SK-N-SH (cell line): ENCODE measurements at regions of chr7 and their contacts with region 1.

Region 1: GRCh38 chr7:70040970-70041766 is 442.9 kb downstream of the AUTS2 start:
- DNase-seq: no peak
- H3K4me3 ChIP-seq: no peak overlapping the region
- H3K27ac ChIP-seq: peak overlapping the region in 1 of 2 experiments; percentile 62; a peak in 1 of 4 replicates
- H3K4me1 ChIP-seq: peaks cover 28 to 55% of the 10 kb centered on the region in 2 experiments
- H3K27me3 ChIP-seq: no peaks in the 10 kb centered on the region
- CTCF ChIP-seq: peak; percentile 78
- EP300 ChIP-seq: no peak
- RAD21 ChIP-seq: peak; percentile 88

Region 2: DNA sequence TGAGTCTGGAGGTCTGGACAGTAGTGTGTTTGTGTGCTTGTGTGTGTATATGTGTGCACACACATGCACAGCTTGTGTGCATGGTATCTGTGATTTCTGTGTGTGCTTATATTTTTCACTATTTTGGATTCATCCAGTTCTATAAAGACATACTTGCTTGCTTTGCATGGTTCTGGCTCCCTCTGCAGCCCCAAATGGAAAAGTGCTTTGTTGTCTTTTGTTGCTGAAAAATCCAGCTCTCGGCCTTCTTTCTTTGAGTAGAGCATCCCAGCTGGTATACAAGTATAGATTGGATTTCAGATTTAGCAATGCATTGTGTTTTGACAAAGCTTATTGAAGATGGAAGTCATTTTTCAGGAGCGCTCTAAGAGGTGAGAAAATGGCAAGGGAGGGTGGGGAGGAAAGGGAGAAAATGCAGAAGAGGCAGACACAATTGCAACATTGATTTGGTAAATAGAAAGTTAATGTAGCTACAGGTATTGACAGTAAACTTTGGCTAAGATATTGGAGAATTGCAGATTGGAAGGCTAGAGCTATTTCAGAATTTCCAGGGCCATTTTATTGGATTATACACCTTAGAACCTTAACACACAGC is 109.0 kb before region 1 on chr7:
- CTCF ChIA-PET with region 1: interaction called, 33 read pairs
- POLR2A ChIA-PET with region 1: no interaction called
- DNase-seq: peak; percentile 61
- H3K4me3 ChIP-seq: no peak overlapping the region
- H3K27ac ChIP-seq: no peak overlapping the region
- H3K4me1 ChIP-seq: peaks cover 0 to 20% of the 10 kb centered on the region in 2 experiments; a peak in 2 of 4 replicates
- H3K27me3 ChIP-seq: no peaks in the 10 kb centered on the region
- CTCF ChIP-seq: peak; percentile 97
- EP300 ChIP-seq: no peak
- RAD21 ChIP-seq: peak; percentile 100

Region 3: GRCh38 chr7:70016044-70016770 is 25.0 kb before region 1 on chr7:
- CTCF ChIA-PET with region 1: interaction called, 27 read pairs
- POLR2A ChIA-PET with region 1: no interaction called
- DNase-seq: no peak
- H3K4me3 ChIP-seq: 0 out of 4 replicates have a peak overlapping the region, but pooled peaks of 1 of the 2 experiments have one; percentile 8
- H3K27ac ChIP-seq: peak overlapping the region in 1 of 2 experiments; percentile 25; a peak in 1 of 4 replicates
- H3K4me1 ChIP-seq: peaks cover 11 to 17% of the 10 kb centered on the region in 2 experiments; a peak in 3 of 4 replicates
- H3K27me3 ChIP-seq: no peaks in the 10 kb centered on the region
- CTCF ChIP-seq: no peak
- EP300 ChIP-seq: 0 out of 4 replicates have a peak, but pooled peaks of 1 of the 2 experiments have one; percentile 43
- RAD21 ChIP-seq: no peak

Region 4: GRCh38 chr7:70060298-70061068 is 19.3 kb after region 1 on chr7:
- CTCF ChIA-PET with region 1: interaction called, 16 read pairs
- POLR2A ChIA-PET with region 1: no interaction called
- DNase-seq: no peak
- H3K4me3 ChIP-seq: no peak overlapping the region
- H3K27ac ChIP-seq: peak overlapping the region in 1 of 2 experiments; percentile 43; a peak in 1 of 4 replicates
- H3K4me1 ChIP-seq: peaks cover 0 to 14% of the 10 kb centered on the region in 2 experiments; a peak in 2 of 4 replicates
- H3K27me3 ChIP-seq: no peaks in the 10 kb centered on the region
- CTCF ChIP-seq: no peak
- EP300 ChIP-seq: no peak
- RAD21 ChIP-seq: no peak

Region 5: DNA sequence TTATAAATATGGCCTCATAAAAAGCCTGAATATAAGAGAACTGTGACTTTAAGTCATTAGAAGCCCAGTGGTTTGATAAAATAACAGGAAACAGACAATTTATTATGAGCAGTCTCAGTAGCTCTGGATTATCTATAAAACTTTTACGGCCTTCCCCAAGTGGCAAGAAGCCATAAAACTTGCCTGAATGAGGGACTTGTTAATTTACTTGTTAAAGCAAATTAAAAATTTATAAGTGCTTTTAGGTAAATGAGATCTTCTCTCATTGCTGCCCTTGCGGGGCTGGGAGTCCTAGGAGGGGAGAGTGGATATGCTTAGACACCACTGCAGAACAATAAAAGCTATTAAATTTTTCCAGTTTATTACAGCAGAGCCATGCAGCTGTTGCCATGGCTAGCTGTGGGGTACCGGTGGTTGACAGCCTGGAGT is 57.0 kb after region 1 on chr7:
- CTCF ChIA-PET with region 1: no interaction called
- POLR2A ChIA-PET with region 1: no interaction called
- DNase-seq: no peak
- H3K4me3 ChIP-seq: no peak overlapping the region
- H3K27ac ChIP-seq: no peak overlapping the region
- H3K4me1 ChIP-seq: peaks cover 23 to 24% of the 10 kb centered on the region in 2 experiments
- H3K27me3 ChIP-seq: no peaks in the 10 kb centered on the region
- CTCF ChIP-seq: no peak
- EP300 ChIP-seq: no peak
- RAD21 ChIP-seq: no peak

Region 6: DNA sequence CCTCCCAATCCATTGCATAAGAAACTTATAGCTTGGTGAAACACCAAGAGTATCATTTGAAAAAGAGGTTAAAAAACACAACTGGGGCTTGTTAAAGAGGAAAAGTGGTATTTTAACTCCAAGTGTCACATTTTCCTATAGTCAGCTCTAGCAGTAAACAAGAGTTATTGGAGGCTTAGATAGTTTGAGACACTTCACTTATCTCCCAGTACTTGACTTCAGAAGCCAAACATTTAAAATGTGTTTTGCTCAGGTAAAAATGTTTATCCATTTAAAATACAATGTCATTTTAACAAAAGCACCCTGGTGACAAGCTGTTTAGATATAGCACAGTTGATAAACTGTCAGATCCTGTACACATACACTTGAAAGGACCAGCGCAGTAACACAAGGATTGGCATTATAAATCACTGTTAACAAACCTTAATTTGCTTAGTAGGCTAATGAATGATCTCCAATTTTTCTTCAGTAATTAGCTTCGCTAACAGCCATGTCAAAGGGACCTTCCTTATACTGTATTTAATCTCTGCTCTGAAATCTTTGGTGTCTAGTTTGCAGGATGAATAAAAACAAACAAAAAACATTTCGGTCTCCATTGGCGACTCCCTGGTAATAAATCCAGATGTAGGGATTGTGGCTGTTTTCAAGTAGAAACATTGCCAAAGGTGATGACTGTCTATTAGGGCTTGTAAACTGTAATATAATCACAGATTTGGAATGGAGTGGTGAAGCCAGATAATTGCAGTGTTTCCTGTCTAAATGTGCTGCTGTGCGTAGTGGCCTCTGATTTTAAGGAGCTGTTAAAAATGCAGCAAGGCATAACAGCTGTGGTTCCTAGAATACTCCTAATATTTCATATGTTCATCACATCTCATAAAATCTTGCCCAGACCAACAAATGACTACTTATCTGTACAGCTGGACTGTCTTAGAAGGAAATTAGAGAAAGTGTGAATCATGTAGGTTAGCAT is 102.2 kb after region 1 on chr7:
- CTCF ChIA-PET with region 1: interaction called, 18 read pairs
- POLR2A ChIA-PET with region 1: no interaction called
- DNase-seq: peak; percentile 40
- H3K4me3 ChIP-seq: no peak overlapping the region
- H3K27ac ChIP-seq: peak overlapping the region in 1 of 2 experiments; percentile 79; a peak in 2 of 4 replicates
- H3K4me1 ChIP-seq: peaks cover 9 to 30% of the 10 kb centered on the region in 2 experiments
- H3K27me3 ChIP-seq: no peaks in the 10 kb centered on the region
- CTCF ChIP-seq: no peak
- EP300 ChIP-seq: peak in 1 of 2 experiments; percentile 54; a peak in 1 of 4 replicates
- RAD21 ChIP-seq: 0 out of 2 replicates have a peak, but pooled peaks have one; percentile 2

Region 7: GRCh38 chr7:70380421-70381015 is 339.4 kb after region 1 on chr7:
- CTCF ChIA-PET with region 1: interaction called, 19 read pairs
- POLR2A ChIA-PET with region 1: interaction called, 5 read pairs
- DNase-seq: peak; percentile 19
- H3K4me3 ChIP-seq: peak overlapping the region in 1 of 2 experiments; percentile 20; a peak in 2 of 4 replicates
- H3K27ac ChIP-seq: peak overlapping the region; percentile 87 to 88
- H3K4me1 ChIP-seq: peaks cover 17 to 57% of the 10 kb centered on the region in 2 experiments
- H3K27me3 ChIP-seq: no peaks in the 10 kb centered on the region
- CTCF ChIP-seq: no peak
- EP300 ChIP-seq: peak; percentile 54 to 99
- RAD21 ChIP-seq: no peak